GM10248 (cell line): ENCODE measurements at regions of chr3 and their contacts with region 1.

Region 1: DNA sequence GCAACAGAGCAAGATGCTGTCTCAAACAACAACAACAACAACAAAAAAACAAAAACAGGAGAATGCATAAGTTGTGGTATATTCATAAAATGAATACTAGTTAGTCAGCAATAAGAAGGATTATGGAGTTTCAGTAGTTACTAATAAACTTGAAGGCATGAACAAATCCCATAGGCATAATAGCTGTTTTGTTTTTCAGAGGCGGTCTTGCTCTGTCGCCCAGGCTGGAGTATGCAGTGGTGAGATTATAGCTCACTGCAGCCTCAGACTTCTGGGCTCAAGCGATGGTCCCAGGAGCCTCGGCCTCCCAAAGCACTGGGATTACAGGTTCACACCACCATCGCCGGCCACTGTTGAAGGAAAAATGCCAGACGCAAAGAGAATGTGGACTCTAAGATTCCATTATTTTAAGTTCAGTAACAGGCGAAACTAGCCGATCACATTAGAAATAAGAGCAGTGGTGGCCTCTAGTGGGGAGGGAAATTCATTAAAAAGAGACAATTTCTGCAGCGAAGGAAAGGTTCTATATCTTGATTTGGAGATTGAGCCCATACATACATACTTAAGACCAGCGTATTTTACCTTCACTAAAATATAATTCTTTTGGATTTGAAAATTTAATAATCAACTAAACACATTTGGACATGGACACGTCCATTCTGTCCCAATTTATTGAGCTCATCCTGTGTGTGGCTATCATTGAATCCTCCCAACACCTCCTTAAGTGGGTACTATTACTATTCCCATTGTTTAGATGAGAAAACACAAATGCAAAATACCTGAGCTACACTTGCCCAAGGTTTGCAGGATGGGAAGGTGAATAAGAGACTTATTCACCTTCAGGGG is 27.4 kb upstream of the HDAC11 start:
- DNase-seq: peak; percentile 60
- CTCF ChIP-seq: peak; percentile 61

Region 2: DNA sequence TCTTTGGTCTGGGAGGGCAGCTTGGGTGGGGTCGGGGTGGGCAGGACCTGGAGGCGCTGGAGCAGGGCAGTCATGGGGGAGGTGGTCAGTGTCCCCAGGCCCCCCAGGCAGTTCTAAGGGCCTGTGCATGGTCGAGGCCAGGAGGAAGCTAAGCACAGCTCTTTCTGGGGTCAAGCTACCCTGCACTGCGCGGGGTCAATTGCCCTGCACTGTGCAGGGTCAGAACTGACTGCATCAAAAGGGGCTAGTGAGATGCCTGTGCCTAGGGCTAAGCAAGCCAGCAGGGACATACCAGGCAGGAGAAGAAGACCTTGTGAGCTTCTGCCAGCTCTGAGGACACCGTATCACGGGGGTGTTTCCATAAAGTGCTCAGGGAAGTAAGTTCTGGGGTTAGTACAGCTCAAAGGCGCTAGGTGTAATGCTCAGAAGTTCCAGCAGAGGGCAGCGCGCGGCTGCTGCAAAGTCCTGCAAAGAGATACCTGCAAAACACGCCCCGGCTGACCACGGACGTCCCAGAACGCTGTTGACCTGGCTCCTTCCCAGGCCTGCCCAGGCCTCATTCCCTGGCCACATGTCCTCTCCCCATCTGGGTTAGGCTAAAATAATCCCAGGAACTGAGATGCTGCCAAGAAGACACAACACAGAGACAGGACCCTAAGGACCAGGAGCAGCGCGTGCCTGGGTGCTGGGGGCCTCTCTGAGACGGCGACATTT is 360.7 kb before region 1 on chr3:
- CTCF ChIA-PET with region 1: interaction called, 97 read pairs
- POLR2A ChIA-PET with region 1: interaction called, 3 read pairs
- DNase-seq: peak; percentile 85
- CTCF ChIP-seq: peak; percentile 94

Region 3: DNA sequence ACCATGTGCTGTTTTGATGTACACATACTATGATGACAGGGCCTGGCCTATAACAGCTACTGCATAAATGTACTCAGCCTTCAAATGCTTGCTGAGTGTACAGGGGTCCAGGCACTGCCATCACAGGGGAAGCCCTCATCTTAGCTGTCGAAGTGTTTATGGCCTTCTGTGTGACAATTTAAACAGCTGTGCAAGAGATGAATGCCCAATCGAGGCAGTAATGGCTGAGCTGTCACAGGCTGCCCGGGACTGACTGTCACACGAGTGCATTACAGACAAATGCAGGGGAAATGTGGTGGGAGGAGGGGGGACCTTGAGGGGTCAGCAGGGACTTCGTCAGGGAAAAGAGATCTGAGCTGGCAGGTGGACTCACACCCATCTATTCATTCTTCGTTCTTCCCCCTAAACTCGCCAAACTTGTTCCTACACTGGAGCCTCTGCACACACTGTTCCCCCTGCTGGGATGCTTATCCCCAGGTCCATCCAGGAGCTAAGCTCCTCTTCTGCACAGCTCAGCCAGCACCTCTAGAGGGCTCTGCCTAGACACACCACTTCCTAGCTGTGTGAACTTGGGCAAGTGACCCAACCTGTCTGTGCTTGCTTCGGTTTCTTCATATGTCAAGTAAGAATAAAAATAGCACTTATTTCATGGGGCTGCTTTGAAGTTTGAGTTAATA is 223.3 kb before region 1 on chr3:
- CTCF ChIA-PET with region 1: interaction called, 15 read pairs
- POLR2A ChIA-PET with region 1: no interaction called
- DNase-seq: peak; percentile 52
- CTCF ChIP-seq: peak; percentile 42

Region 4: GRCh38 chr3:13391308-13391707 is 61.4 kb before region 1 on chr3:
- CTCF ChIA-PET with region 1: interaction called, 13 read pairs
- POLR2A ChIA-PET with region 1: no interaction called
- DNase-seq: no peak
- CTCF ChIP-seq: no peak

Region 5: DNA sequence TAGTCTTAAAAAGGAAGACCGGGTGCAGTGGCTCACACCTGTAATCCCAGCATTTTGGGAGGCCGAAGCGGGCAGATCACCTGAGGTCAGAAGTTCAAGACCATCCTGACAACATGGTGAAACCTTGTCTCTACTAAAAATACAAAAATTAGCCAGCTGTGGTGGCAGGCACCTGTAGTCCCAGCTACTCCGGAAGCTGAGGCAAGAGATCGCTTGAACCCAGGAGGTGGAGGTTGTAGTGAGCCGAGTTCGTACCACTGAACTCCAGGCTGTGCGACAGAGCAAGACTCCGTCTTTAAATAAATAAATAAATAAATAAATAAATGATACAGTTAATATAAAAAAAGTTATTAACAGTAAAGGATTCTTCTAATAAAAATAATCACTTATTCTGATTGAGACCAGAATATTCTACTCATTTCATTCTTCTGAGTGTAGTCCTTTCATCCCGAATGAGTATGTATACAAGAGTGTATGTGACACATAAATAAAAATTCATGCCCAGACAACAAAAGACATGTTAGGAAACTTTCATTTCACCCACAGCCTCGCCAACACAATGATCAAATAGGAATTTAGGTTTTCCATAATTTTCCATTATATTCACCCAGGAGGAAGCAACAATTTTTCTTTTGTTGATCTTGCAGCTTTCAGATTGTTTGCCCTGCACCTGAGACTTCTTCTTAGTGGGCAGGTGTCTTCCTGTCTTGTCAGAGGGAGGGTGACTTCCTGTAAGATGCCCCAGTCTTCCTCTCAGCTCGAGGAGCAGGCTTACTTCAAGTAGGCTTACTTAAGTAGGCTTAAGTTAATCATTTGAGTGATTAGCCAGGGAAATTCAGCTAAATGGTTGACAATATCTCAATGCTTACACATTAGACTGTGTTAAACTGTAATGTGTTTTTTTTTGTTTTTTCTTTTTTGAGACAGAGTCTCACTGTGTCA is 24.8 kb before region 1 on chr3:
- CTCF ChIA-PET with region 1: interaction called, 25 read pairs
- POLR2A ChIA-PET with region 1: interaction called, 4 read pairs
- DNase-seq: no peak
- CTCF ChIP-seq: no peak

Region 6: GRCh38 chr3:13637311-13637891 is 184.7 kb after region 1 on chr3:
- CTCF ChIA-PET with region 1: no interaction called
- POLR2A ChIA-PET with region 1: no interaction called
- DNase-seq: no peak
- CTCF ChIP-seq: no peak

Region 7: DNA sequence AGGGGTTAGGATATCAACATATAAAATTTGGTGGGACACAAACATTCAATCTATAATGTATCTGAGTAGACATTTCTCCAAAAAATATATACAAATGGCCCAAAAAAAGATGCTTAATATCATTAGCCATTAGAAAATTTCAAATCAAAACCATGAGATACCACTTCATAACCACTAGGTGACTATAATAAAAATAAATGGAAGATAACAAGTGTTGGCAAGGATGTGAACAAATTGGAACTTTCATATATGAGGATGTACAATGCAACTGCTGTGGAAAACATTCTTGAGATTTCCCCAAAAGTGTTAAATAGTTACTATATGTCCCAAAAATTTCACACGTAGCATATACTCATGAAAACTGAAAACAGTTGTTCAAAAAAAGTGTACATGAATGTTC is 463.7 kb after region 1 on chr3:
- CTCF ChIA-PET with region 1: no interaction called
- POLR2A ChIA-PET with region 1: no interaction called
- DNase-seq: no peak
- CTCF ChIP-seq: no peak